ENCODE measurements at regions of chr3 and their contacts with region 1.

Region 1: DNA sequence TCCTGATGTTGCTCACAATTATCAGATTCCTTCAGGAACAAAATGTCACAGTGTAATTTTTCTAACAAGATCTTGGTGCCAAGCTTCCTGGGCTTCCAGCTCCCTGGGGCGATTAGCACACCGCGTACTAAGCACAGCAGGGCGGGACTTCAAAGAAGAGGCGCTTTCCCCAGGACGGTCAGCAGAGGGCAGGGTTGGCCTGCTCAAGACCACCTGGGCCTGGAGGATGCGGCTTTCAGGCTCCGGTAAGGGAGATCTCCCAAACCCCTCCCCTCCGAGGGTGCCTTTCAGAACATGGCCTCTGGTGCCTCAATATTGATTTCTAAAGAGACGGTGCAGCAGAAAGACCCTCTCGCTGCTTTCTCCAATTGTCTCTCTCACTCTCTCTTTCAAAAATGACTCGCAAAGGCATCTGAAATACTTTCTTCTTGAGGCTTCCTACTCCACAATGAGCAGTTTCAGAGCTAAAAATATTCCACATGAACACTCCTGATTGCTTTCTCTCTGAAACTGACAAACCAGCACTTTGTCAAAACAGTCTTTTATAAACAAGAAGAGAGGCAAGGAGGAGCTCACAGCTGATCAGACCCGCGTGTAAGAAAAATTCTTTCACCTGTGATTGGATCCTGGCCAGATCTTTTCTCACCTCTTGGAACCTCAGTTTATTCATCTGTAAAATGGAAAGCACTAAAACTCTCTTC is 154.0 kb downstream of the ADAMTS9 start:
- DNase-seq: peak; percentile 49 to 83
- ATAC-seq: peak; percentile 98 to 99
- H3K4me3 ChIP-seq: no peak overlapping the region
- H3K27ac ChIP-seq: no peak overlapping the region; a peak in 1 of 6 replicates
- H3K4me1 ChIP-seq: peaks cover 4% of the 10 kb centered on the region; the same call in 1 of the 3 replicates
- CTCF ChIP-seq: peak; percentile 66
- EP300 ChIP-seq: no peak
- POLR2A ChIP-seq: no peak
- RAD21 ChIP-seq: peak; percentile 83 to 88

Region 2: DNA sequence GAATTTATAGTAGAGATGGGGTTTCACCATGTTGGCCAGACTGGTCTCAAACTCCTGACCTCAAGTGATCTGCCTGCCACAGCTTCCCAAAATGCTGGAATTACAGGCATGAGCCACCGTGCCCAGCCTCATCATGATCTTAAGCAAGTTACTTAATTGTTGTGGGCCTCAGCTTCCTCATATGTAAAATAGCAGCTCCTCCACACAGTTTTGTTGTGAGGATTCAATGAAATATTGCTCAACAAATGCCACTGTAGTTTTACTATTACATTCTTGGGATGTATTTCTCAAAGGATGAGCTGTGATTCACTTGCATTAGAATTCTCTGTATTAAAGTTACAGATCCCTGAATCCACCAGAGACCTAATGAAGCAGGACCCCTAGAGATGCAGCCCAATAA is 14.8 kb before region 1 on chr3:
- CTCF ChIA-PET with region 1: interaction called, 11 read pairs
- POLR2A ChIA-PET with region 1: no interaction called
- DNase-seq: no peak
- ATAC-seq: no peak
- H3K4me3 ChIP-seq: no peak overlapping the region
- H3K27ac ChIP-seq: no peak overlapping the region
- H3K4me1 ChIP-seq: no peaks in the 10 kb centered on the region
- CTCF ChIP-seq: no peak
- EP300 ChIP-seq: no peak
- POLR2A ChIP-seq: no peak
- RAD21 ChIP-seq: no peak

Region 3: DNA sequence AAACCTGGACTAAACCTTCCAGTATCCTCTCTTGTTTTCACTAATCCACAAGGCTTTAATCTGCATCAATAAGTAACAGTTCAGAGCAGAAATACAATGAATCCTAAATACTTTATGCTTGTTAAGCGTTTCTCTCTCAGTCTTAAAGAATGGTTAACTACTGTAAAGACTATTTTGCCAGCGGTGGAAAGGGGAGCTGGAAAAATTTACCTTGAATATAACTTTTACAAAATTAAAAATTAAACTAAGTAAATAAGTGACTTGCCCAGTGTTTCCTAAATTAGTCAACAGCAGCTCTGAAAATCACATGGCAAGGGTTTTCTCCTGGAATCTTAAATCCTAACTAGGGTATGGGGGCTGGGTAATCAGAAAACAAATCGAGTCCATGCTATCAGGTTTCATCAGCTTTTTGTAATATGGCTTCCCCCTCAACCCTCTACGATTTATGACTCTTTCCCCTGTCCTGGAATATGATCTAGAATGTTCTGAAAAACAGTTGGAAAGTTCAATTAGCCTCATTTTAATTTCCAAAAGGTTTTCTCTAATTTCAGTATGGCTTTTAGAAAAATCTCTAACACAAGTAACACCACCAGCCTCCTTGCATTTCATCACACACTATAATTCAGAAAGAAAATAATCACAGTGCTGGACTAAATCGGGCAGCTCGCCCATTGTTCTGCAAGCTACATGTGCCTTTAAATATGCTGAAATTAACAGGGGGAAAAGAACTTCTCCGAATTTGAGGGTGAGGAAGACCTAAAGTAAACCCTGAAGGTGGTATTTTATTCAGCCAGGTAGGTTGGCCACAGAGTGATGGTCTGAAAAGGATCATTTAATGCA is 20.5 kb after region 1 on chr3:
- CTCF ChIA-PET with region 1: interaction called, 17 read pairs
- POLR2A ChIA-PET with region 1: no interaction called
- DNase-seq: no peak
- ATAC-seq: no peak
- H3K4me3 ChIP-seq: no peak overlapping the region
- H3K27ac ChIP-seq: no peak overlapping the region
- H3K4me1 ChIP-seq: no peaks in the 10 kb centered on the region
- CTCF ChIP-seq: no peak
- EP300 ChIP-seq: no peak
- POLR2A ChIP-seq: no peak
- RAD21 ChIP-seq: no peak

Measured in A549 (cell line).